Stomach (tissue), 19 donors: ENCODE measurements at regions of chr9 and their contacts with region 1.

Region 1: DNA sequence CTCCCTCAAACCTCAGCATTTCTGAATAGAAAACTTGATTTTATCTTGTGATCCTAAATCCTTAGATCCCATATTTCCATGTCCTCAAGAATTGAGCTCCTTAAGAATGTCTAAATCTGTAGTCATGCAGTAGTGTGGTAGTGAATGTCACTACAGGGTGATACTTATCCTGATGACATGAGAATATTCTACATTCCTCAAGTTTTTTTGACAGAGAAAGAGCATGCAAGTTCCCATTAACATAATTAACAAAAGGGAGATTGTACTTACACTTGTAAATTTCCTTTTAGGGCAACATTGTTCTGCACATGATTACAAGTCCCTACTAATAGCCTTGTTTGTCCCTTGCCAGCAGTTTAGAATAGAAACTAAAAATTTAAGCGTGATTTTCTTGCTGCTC is 352.3 kb downstream of the PTPRD start:
- DNase-seq: no peak
- H3K4me3 ChIP-seq: no peak overlapping the region
- H3K27ac ChIP-seq: no peak overlapping the region
- H3K4me1 ChIP-seq: no peaks in the 10 kb centered on the region
- H3K27me3 ChIP-seq: no peaks in the 10 kb centered on the region
- CTCF ChIP-seq: no peak
- EP300 ChIP-seq: no peak
- POLR2A ChIP-seq: no peak

Region 2: DNA sequence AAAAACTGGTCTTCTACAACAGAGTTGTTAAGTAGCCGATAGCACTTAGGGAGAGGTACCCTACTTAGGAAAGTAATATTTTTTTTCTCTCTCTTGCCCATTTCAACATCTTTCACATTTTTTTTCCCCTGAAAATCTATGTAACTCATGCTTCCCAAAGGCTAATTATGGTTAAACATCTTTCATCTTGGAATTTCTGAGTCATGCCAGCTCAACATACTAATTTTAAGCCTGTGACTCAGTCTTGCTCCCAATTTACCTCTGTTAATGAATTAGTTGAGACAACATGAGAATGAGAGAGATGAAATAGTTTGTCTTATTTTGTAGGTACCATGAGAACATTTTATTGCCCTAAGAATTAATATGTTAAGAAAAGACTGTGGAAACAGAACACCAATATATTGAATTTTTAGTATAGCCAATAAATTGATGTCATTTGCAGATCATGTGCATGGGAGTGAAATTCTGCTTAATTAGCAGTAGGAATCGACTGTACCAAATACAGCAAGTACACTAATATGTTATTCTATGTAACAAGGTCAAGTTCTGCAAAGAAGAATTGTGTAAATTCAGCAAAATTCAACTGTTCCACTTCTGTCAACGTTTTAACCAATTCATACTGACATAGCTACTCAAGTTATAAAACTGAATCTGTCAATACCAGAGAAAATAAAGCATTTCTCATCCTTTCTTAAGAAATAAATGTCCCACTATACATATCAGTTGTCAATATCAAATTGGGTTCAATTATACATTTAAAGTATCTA is 197.7 kb before region 1 on chr9:
- intact Hi-C with region 1: loop called (anchors 5 kb)
- DNase-seq: no peak
- H3K4me3 ChIP-seq: no peak overlapping the region
- H3K27ac ChIP-seq: no peak overlapping the region
- H3K4me1 ChIP-seq: peaks cover 0 to 5% (median 0%) of the 10 kb centered on the region in 4 donors
- H3K27me3 ChIP-seq: no peaks in the 10 kb centered on the region
- CTCF ChIP-seq: no peak
- EP300 ChIP-seq: no peak
- POLR2A ChIP-seq: no peak

Region 3: GRCh38 chr9:10204276-10204675 is 56.2 kb before region 1 on chr9:
- intact Hi-C with region 1: no loop called
- DNase-seq: no peak
- H3K4me3 ChIP-seq: no peak overlapping the region
- H3K27ac ChIP-seq: no peak overlapping the region
- H3K4me1 ChIP-seq: no peaks in the 10 kb centered on the region
- H3K27me3 ChIP-seq: no peaks in the 10 kb centered on the region
- CTCF ChIP-seq: no peak
- EP300 ChIP-seq: no peak
- POLR2A ChIP-seq: no peak

Region 4: GRCh38 chr9:11275158-11275695 is 1014.7 kb after region 1 on chr9:
- intact Hi-C with region 1: no loop called
- DNase-seq: peak in 1 of 2 donors; percentile 7
- H3K4me3 ChIP-seq: no peak overlapping the region
- H3K27ac ChIP-seq: no peak overlapping the region
- H3K4me1 ChIP-seq: no peaks in the 10 kb centered on the region
- H3K27me3 ChIP-seq: no peaks in the 10 kb centered on the region
- CTCF ChIP-seq: no peak
- EP300 ChIP-seq: no peak
- POLR2A ChIP-seq: no peak